Caco-2 (cell line): ENCODE measurements at regions of chr12 and their contacts with region 1.

Region 1: DNA sequence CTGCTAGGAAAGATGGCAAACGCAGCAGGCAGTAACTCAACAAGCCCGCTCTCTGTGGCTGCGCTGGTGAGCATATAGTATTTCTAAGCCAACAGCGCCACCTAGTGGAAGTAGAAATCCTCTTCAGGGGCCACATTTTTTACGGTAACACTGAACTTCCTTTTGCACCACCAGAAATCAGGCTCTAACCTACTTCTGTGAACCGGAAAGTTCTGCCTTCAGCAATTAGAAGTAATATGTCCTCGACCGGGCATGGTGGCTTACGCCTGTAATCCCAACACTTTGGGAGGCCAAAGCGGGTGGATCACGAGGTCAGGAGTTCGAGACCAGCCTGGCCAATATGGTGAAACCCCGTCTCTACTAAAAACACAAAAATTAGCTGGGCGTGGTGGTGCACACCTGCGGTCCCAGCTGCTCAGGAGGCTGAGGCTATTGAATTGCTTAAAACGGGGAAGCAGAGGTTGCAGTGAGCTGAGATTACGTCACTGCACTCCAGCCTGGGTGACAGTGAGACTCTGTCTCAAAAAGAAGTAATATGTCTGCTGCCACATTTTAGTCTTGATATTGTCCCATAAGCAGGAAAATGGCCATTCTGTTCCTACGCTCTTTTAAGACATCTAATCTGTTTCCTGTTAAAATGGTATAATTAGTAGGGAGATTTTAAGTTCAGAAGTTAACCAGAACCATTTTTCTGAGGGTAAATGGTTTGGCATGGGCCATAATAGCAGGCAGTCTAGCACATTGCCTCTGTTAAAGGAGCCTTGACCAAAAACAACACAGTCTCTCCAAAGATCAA is 26.8 kb downstream of the APOBEC1 start:
- DNase-seq: peak; percentile 82 to 87
- H3K4me3 ChIP-seq: no peak overlapping the region
- H3K4me3 Mint-ChIP-seq: peak overlapping the region; percentile 57
- H3K27ac Mint-ChIP-seq: peak overlapping the region; percentile 16
- H3K4me1 ChIP-seq: peaks cover 31% of the 10 kb centered on the region
- H3K4me1 Mint-ChIP-seq: peaks cover 35% of the 10 kb centered on the region
- H3K27me3 ChIP-seq: no peaks in the 10 kb centered on the region
- H3K27me3 Mint-ChIP-seq: no peaks in the 10 kb centered on the region
- CTCF ChIP-seq: peak; percentile 80 to 97

Region 2: DNA sequence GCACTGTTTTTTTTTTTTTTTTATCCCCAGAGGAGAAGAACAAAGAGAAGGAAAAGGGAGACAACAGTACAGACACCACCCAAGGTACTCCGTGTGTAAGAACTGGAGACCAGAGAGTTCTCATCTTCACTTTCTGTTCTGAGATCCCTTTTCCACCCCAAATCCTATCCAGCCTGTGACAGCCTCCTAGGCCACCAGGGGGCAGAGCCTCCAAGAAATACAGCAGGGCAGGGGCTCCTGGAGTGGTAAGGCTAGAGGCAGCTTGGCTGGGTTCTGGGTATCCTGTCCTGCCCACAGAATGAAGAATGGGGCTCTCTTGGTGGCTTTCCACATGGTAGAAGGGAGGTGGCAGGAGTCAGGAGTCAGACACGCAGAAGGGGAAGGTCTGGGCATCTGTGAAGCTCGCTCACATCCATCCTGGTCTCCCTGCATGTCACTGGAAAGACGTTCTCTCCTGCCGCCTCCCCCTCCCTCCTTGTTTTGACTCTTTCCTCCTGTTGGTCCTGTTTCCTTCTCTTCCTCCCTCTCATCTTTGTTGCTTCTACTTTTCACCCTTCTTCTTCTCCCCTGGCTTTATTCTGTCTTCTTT is 496.8 kb before region 1 on chr12:
- CTCF ChIA-PET with region 1: no interaction called
- POLR2A ChIA-PET with region 1: no interaction called
- intact Hi-C with region 1: loop called (anchors 1 kb)
- DNase-seq: peak; percentile 75 to 81
- H3K4me3 ChIP-seq: no peak overlapping the region
- H3K4me3 Mint-ChIP-seq: no peak overlapping the region
- H3K27ac Mint-ChIP-seq: no peak overlapping the region
- H3K4me1 ChIP-seq: no peaks in the 10 kb centered on the region
- H3K4me1 Mint-ChIP-seq: no peaks in the 10 kb centered on the region
- H3K27me3 ChIP-seq: no peaks in the 10 kb centered on the region
- H3K27me3 Mint-ChIP-seq: no peaks in the 10 kb centered on the region
- CTCF ChIP-seq: peak; percentile 91 to 93

Region 3: GRCh38 chr12:7374423-7375144 is 264.4 kb before region 1 on chr12:
- CTCF ChIA-PET with region 1: no interaction called
- POLR2A ChIA-PET with region 1: no interaction called
- intact Hi-C with region 1: loop called (anchors 1 kb)
- DNase-seq: peak; percentile 85
- H3K4me3 ChIP-seq: no peak overlapping the region
- H3K4me3 Mint-ChIP-seq: no peak overlapping the region
- H3K27ac Mint-ChIP-seq: no peak overlapping the region
- H3K4me1 ChIP-seq: peaks cover 12% of the 10 kb centered on the region; the same call in 1 of the 2 replicates
- H3K4me1 Mint-ChIP-seq: peaks cover 10% of the 10 kb centered on the region
- H3K27me3 ChIP-seq: no peaks in the 10 kb centered on the region
- H3K27me3 Mint-ChIP-seq: peaks cover 6% of the 10 kb centered on the region
- CTCF ChIP-seq: peak; percentile 94 to 96

Region 4: DNA sequence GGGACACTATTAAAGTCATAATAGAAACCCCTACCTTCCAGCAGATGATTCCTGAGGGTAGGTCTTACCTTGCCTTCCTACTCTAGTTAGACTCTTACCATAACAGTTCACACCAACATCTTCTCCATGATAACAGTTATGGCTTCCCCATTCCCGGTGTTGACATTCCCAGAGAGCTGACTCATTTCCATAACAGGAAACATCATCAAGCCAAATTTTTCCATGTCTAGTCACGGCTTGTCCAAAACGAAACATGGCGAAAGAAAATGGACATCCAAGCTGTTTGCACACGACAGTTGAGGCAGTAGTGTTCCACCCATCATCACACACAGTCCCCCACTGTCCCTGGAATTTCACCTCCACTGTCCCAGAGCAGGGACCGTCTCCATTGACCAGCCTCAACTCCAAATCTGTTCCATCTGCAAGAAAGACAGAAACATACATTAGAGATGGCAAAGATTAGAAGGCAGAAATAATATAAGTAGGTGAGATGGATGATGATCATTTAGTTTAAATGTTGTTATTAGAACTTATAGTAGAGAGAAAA is 205.6 kb before region 1 on chr12:
- CTCF ChIA-PET with region 1: no interaction called
- POLR2A ChIA-PET with region 1: no interaction called
- intact Hi-C with region 1: no loop called
- DNase-seq: no peak
- H3K4me3 ChIP-seq: no peak overlapping the region
- H3K4me3 Mint-ChIP-seq: no peak overlapping the region
- H3K27ac Mint-ChIP-seq: no peak overlapping the region
- H3K4me1 ChIP-seq: no peaks in the 10 kb centered on the region
- H3K4me1 Mint-ChIP-seq: peaks cover 7% of the 10 kb centered on the region
- H3K27me3 ChIP-seq: no peaks in the 10 kb centered on the region
- H3K27me3 Mint-ChIP-seq: peaks cover 14% of the 10 kb centered on the region
- CTCF ChIP-seq: no peak

Region 5: GRCh38 chr12:7498832-7499231 is 140.1 kb before region 1 on chr12:
- CTCF ChIA-PET with region 1: no interaction called
- POLR2A ChIA-PET with region 1: no interaction called
- intact Hi-C with region 1: no loop called
- DNase-seq: no peak
- H3K4me3 ChIP-seq: no peak overlapping the region
- H3K4me3 Mint-ChIP-seq: no peak overlapping the region
- H3K27ac Mint-ChIP-seq: no peak overlapping the region
- H3K4me1 ChIP-seq: peaks cover 18% of the 10 kb centered on the region
- H3K4me1 Mint-ChIP-seq: peaks cover 24% of the 10 kb centered on the region
- H3K27me3 ChIP-seq: no peaks in the 10 kb centered on the region
- H3K27me3 Mint-ChIP-seq: peaks cover 10% of the 10 kb centered on the region
- CTCF ChIP-seq: no peak

Region 6: GRCh38 chr12:7583571-7583970 is 55.4 kb before region 1 on chr12:
- CTCF ChIA-PET with region 1: no interaction called
- POLR2A ChIA-PET with region 1: no interaction called
- intact Hi-C with region 1: loop called (anchors 1 kb)
- DNase-seq: peak in 1 of 2 experiments; percentile 14
- H3K4me3 ChIP-seq: no peak overlapping the region
- H3K4me3 Mint-ChIP-seq: no peak overlapping the region
- H3K27ac Mint-ChIP-seq: peak overlapping the region; percentile 46
- H3K4me1 ChIP-seq: no peaks in the 10 kb centered on the region
- H3K4me1 Mint-ChIP-seq: peaks cover 10% of the 10 kb centered on the region
- H3K27me3 ChIP-seq: no peaks in the 10 kb centered on the region
- H3K27me3 Mint-ChIP-seq: no peaks in the 10 kb centered on the region
- CTCF ChIP-seq: no peak